ENCODE measurements at regions of chr9 and their contacts with region 1.

Region 1: DNA sequence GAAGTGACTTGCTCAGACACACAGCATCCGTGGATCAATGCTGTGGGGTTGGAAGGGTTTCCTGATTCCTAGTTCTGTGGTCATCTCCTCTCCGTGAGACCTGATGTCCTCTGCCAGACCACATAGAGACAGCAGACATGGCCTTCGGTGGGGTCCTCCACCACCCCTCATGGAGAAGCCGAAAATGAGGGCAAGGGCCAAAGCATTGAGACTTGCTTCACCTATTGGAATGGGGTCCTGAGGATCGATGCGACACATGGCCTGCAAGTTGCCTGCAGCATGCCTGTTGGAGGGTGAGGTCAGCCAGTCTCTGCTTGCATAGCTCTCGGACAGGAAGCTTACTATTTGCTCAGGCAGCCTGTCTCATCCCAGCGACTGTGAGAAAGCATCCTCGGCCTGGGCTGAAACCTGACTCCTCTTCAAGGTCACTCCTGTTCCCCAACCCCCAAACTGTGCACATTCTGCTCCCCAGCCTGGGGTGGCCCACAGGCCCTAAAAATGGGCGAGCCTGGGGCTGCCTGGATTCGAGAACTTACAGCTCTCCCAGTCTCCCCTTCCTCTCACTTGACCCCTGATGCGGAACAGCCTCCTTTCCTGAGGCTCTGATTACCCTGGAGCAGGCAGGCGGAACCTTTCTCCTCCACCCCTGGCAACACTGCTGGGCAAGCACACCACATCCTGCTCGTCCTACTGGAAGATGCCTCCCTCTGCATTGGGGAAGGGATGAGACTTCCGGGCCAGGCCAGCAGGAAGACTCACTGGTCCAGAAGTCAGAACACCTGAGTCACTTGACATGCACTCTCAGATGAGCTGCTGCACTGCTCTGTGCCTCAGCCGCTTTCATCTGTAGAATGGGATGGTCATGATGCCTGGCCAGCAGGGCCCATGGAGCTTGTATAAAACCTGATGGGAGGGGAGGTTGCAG is 186.9 kb downstream of the RGS3 start:
- DNase-seq: no peak
- ATAC-seq: no peak
- H3K4me3 ChIP-seq: no peak overlapping the region
- H3K27ac ChIP-seq: no peak overlapping the region
- H3K4me1 ChIP-seq: peaks cover 6% of the 10 kb centered on the region
- H3K27me3 ChIP-seq: no peaks in the 10 kb centered on the region
- CTCF ChIP-seq: no peak
- POLR2A ChIP-seq: no peak

Region 2: DNA sequence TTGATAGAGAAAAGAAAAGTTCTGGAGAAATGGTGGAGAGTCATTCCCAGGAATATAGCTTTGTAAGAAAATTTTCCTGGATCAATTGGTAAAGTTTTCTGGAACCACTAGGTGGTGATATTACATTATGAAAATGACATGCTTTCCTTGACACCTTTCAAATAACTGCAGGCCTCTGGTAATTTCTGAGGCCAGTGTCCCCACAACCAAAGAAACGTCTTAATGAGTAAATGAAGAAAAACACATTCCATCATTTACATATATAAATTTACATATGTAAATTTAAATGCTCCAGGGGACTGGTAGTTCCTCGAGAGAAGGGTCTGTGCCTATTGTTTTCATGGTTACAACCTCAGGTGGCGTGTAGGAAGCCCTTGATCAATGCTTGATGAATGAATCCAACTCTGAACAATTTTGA is 204.1 kb before region 1 on chr9:
- intact Hi-C with region 1: loop called (anchors 5 kb)
- DNase-seq: peak in 1 of 4 donors; percentile 12
- ATAC-seq: peak; percentile 74
- H3K4me3 ChIP-seq: no peak overlapping the region
- H3K27ac ChIP-seq: no peak overlapping the region
- H3K4me1 ChIP-seq: no peaks in the 10 kb centered on the region
- H3K27me3 ChIP-seq: no peaks in the 10 kb centered on the region
- CTCF ChIP-seq: peak; percentile 13 to 83 (median 69)
- POLR2A ChIP-seq: no peak

Region 3: DNA sequence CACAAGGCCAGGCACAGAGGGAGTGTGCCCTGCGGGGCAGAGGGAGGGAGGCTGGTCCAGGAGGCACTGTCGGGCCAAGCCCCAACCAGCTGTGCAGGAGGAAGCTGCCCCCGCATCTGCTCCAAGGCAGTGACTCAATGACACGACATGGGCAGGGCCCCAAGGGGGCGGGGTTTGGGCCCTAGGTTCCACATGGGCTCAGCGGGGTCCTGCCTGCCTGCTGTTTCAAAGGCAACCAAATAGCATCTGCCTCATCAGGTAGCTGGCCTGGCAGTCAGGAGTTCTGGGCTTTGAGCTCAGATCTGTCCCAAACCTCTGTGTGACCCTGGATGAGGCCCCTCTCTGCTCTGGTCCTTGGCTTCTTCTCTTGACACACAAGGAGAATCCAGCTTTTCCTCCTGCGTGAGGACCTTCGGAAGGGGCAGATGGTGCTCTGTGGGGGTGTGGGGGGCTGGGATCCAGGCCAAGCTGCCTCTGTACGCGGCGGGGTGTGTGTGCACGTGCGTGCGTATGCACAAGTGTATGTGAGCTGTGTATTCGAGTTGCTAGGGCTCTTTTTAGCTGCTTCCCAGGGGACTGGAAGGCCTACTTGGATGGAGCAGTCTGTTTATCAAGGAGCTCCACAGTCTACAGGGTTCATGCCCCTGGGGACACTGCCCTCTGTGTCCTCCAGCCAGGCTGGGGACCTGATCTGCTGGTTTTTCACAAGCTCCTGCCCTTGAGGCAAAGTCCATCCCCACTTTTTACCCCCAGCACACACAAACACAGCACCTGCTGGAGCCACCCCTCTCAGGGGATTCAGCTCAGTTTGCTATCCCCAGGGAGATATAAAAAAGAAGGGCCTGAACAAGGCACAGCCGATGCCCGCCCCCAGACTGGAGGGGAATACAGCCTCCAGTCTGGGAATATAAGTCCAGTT is 48.1 kb before region 1 on chr9:
- intact Hi-C with region 1: loop called (anchors 5 kb)
- DNase-seq: peak; percentile 47 to 70 (median 64)
- ATAC-seq: peak; percentile 62
- H3K4me3 ChIP-seq: no peak overlapping the region
- H3K27ac ChIP-seq: peak overlapping the region in 3 of 4 donors; percentile 24 to 63 (median 51)
- H3K4me1 ChIP-seq: peaks cover 36% of the 10 kb centered on the region
- H3K27me3 ChIP-seq: no peaks in the 10 kb centered on the region
- CTCF ChIP-seq: no peak
- POLR2A ChIP-seq: no peak

Region 4: DNA sequence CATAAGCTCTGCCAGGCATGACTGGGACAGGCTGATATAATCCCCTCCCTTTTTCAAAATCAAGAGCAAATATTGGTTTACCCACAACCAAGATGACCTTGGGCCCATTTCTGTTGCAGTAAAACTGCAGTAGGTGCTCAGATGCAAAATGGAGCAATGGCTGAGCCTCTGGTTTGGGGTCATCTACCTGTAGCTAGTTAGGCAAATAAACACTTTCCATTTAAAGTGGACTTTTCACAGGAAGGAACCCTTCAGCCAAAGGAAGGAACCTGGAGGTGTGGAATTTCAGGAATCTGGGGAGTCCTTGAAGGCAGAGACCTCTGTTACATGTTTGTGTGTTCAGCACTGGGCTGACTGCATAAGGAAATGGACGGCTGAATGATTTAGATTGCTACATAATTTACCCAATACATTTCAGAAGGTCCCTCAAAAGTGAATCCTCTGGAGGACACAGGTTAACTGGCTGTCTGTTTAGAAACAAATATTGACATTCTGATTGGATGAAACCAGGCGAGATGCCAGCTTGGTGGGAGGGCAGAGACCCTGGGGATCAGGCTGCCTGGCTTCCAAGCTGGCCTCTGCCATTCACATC is 55.6 kb after region 1 on chr9:
- intact Hi-C with region 1: no loop called
- DNase-seq: peak; percentile 21 to 55 (median 42)
- ATAC-seq: peak; percentile 72
- H3K4me3 ChIP-seq: no peak overlapping the region
- H3K27ac ChIP-seq: peak overlapping the region; percentile 32 to 59 (median 52)
- H3K4me1 ChIP-seq: peaks cover 35% of the 10 kb centered on the region
- H3K27me3 ChIP-seq: no peaks in the 10 kb centered on the region
- CTCF ChIP-seq: no peak
- POLR2A ChIP-seq: no peak